Esophagus muscularis mucosa (tissue), 4 donors: ENCODE measurements at regions of chr13 and their contacts with region 1.

Region 1: GRCh38 chr13:51583875-51584730 is at the start of gene WDFY2:
- DNase-seq: peak; percentile 100
- H3K4me3 ChIP-seq: peak within 1 kb of the TSS; percentile 71 to 92 (median 86)
- H3K27ac ChIP-seq: peak within 1 kb of the TSS; percentile 89 to 93 (median 90)
- H3K4me1 ChIP-seq: peaks cover 12 to 33% (median 25%) of the 10 kb centered on the region in 4 donors
- H3K27me3 ChIP-seq: no peaks in the 10 kb centered on the region
- CTCF ChIP-seq: peak in 1 of 3 experiments; percentile 34
- EP300 ChIP-seq: no peak
- POLR2A ChIP-seq: peak; percentile 45
- total RNA-seq, gene WDFY2: 4.7 to 8.7 (median 5.7) TPM

Region 2: DNA sequence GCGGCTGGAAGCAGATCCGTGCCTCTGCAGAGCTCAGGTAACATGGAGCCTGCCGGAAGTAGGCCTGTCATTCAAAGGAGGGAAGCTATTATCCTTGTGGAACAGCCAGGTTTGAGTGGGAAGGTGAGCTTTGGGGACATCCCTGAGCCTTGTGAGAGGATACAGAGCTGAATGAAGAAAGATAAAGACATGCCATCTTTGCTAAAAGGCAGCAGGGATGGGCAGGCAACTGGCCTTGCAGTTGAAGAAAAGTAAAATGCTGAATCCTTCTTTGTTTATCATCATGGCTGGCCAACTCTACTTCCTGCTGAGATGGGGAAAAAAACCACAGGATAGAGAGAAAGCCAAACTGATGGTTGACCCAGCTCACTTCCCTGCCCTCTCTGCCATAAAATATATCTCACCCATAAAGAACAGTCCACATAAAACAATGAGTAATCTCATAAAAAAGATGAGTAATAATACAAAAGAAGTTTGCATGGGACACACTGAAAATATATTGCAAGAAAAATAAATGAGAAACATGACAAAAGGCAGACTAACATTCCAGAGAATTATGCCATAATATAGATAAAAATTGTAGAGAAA is 966.9 kb before region 1 on chr13:
- intact Hi-C with region 1: no loop called
- DNase-seq: no peak
- H3K4me3 ChIP-seq: no peak overlapping the region
- H3K27ac ChIP-seq: no peak overlapping the region
- H3K4me1 ChIP-seq: no peaks in the 10 kb centered on the region
- H3K27me3 ChIP-seq: no peaks in the 10 kb centered on the region
- CTCF ChIP-seq: no peak
- EP300 ChIP-seq: no peak
- POLR2A ChIP-seq: no peak

Region 3: GRCh38 chr13:51452361-51453206 is 131.5 kb before region 1 on chr13 and contains the start of gene INTS6:
- intact Hi-C with region 1: loop called (anchors 2 kb)
- DNase-seq: peak; percentile 100
- H3K4me3 ChIP-seq: peak within 1 kb of the TSS; percentile 76 to 99 (median 93)
- H3K27ac ChIP-seq: peak within 1 kb of the TSS; percentile 98 to 100 (median 100)
- H3K4me1 ChIP-seq: peaks cover 22 to 44% (median 36%) of the 10 kb centered on the region in 4 donors
- H3K27me3 ChIP-seq: no peaks in the 10 kb centered on the region
- CTCF ChIP-seq: no peak
- EP300 ChIP-seq: no peak
- POLR2A ChIP-seq: peak; percentile 99
- total RNA-seq, gene INTS6: 24.3 to 34.5 (median 28.9) TPM

Region 4: GRCh38 chr13:51729866-51730546 is 145.9 kb after region 1 on chr13:
- intact Hi-C with region 1: loop called (anchors 10 kb)
- DNase-seq: no peak
- H3K4me3 ChIP-seq: peak overlapping the region in 3 of 4 donors; percentile 0 to 20 (median 15)
- H3K27ac ChIP-seq: peak overlapping the region; percentile 60 to 78 (median 65)
- H3K4me1 ChIP-seq: peaks cover 20 to 34% (median 31%) of the 10 kb centered on the region in 4 donors
- H3K27me3 ChIP-seq: no peaks in the 10 kb centered on the region
- CTCF ChIP-seq: no peak
- EP300 ChIP-seq: no peak
- POLR2A ChIP-seq: no peak

Region 5: GRCh38 chr13:51797664-51798488 is 213.8 kb after region 1 on chr13:
- intact Hi-C with region 1: loop called (anchors 5 kb)
- DNase-seq: no peak
- H3K4me3 ChIP-seq: no peak overlapping the region
- H3K27ac ChIP-seq: no peak overlapping the region
- H3K4me1 ChIP-seq: peaks cover 25 to 43% (median 38%) of the 10 kb centered on the region in 4 donors
- H3K27me3 ChIP-seq: no peaks in the 10 kb centered on the region
- CTCF ChIP-seq: peak in 2 of 3 experiments; percentile 23 to 34
- EP300 ChIP-seq: no peak
- POLR2A ChIP-seq: no peak

Region 6: GRCh38 chr13:52371736-52372247 is 787.7 kb after region 1 on chr13:
- intact Hi-C with region 1: no loop called
- DNase-seq: no peak
- H3K4me3 ChIP-seq: no peak overlapping the region
- H3K27ac ChIP-seq: no peak overlapping the region
- H3K4me1 ChIP-seq: no peaks in the 10 kb centered on the region
- H3K27me3 ChIP-seq: no peaks in the 10 kb centered on the region
- CTCF ChIP-seq: no peak
- EP300 ChIP-seq: no peak
- POLR2A ChIP-seq: no peak